ENCODE measurements at regions of chr1 and their contacts with region 1.

Region 1: DNA sequence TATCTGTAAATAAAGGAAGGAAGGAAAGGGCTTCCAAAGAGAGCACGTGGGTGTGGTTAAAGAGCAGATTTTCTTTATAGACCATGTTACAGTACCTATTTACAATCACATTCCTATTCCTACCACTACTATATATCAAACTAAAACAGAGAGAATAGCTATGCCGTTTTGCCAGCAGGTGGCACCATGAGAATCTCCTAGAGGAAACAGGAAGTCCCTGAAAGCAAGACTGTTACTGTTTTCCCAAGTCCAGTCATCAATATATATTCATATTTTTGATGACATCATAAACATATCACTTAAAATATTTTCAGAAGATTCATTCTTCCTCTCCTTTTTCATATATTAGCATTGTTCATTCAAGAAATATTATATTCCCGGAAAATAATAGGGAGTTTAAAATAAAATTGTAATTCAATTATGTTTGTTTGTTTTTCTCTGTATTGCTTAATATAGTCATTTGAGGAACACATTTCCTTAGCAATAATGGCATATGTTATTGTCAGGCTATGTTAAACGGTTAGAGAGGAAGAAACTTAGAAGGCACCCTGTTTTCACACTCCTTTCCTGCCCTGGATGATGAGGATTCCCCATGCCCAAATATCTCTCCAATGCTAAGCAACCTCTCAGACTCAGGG is 6.6 kb downstream of the CCDC190 start:
- DNase-seq: peak; percentile 55
- H3K4me3 ChIP-seq: no peak overlapping the region
- H3K27ac ChIP-seq: no peak overlapping the region
- H3K27me3 ChIP-seq: no peaks in the 10 kb centered on the region
- CTCF ChIP-seq: peak; percentile 87

Region 2: DNA sequence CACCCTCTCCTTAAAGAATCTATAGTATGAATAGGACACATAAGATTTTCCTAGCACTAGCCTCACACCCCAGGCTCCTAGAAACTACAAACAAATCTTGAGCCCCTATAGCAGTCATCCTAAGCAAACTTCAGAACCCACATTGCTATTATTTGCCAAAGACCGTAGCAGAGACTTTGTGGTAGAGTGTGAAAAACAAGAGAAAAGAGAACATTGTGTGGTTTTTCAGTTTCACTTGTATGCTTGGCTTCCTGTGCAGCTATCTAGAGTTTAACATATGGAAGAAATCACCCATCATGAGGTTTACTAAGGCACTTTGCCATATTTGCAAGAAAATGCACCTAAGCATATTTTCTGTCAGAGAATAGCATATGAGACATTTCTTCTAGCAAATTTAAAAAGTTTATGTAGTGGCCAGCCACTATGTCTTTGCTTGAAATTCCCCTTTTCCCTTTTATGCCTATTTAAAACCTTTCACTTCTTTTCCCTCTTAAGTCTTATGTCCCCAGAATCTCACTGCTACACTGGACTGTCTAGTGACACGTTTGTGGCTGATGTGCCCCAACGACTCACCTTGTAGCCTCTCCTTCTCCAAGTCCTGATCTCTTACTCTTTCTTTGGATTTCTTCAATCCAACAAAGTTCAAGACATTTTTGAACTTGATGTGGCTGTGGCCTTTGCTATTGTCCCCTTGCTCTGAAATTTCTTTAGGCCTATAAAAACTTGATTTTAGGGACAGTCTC is 19.0 kb before region 1 on chr1:
- CTCF ChIA-PET with region 1: interaction called, 16 read pairs
- POLR2A ChIA-PET with region 1: no interaction called
- DNase-seq: no peak
- H3K4me3 ChIP-seq: no peak overlapping the region
- H3K27ac ChIP-seq: no peak overlapping the region
- H3K27me3 ChIP-seq: peaks cover 7% of the 10 kb centered on the region
- CTCF ChIP-seq: no peak

Region 3: DNA sequence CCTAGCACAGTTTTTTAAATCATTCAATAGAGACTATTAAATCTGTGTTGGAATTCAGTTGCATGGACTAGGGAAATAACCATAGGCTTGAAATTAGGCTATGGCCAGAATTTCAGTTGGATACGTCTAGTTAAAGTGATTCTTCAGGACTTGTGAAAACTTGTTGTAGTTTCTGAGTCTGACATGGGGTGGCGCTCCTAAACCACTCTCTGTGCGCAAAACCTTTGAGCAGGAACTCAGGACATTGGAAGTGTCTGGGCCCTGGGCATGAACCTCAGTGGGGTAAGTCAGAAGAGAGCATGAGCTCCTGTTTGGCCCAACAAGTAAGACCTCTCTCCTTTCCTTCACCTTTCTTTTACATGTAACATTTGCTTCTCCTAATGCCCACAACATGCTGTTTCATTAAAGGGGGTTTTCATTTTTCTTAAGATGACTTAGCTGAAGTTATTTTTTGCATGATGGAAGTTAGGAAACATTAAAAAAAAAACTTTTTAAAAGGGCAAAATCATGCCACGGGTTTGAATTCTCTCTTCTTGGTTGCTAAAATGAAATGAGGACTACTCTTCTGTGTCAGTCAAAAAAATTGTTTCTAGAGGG is 23.7 kb after region 1 on chr1:
- CTCF ChIA-PET with region 1: interaction called, 28 read pairs
- POLR2A ChIA-PET with region 1: no interaction called
- DNase-seq: peak; percentile 38
- H3K4me3 ChIP-seq: no peak overlapping the region
- H3K27ac ChIP-seq: no peak overlapping the region
- H3K27me3 ChIP-seq: no peaks in the 10 kb centered on the region
- CTCF ChIP-seq: peak; percentile 84

Region 4: GRCh38 chr1:162889989-162890388 is 35.6 kb after region 1 on chr1:
- CTCF ChIA-PET with region 1: interaction called, 11 read pairs
- POLR2A ChIA-PET with region 1: no interaction called
- DNase-seq: no peak
- H3K4me3 ChIP-seq: no peak overlapping the region
- H3K27ac ChIP-seq: no peak overlapping the region
- H3K27me3 ChIP-seq: no peaks in the 10 kb centered on the region
- CTCF ChIP-seq: no peak

Region 5: DNA sequence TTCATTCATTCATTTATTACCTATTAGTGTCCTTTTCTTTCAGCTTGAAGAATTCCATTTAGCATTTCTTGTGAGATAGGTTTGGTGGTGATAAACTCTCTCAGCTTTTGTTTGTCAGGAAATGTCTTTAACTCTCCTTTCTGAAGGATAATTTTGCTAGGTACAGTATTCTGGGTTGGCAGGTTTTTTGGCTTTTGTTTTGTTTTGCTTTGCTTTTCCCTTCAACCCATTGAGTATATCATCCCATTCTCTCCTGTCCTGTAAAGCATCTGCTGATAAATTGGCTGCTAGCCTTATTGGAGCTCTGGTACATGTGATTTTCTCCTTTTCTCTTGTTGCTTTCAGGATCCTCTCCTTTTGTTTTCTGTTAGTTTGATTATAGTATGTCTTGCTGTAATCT is 167.8 kb after region 1 on chr1:
- CTCF ChIA-PET with region 1: no interaction called
- POLR2A ChIA-PET with region 1: no interaction called
- DNase-seq: no peak
- H3K4me3 ChIP-seq: no peak overlapping the region
- H3K27ac ChIP-seq: no peak overlapping the region
- H3K27me3 ChIP-seq: no peaks in the 10 kb centered on the region
- CTCF ChIP-seq: no peak

Region 6: DNA sequence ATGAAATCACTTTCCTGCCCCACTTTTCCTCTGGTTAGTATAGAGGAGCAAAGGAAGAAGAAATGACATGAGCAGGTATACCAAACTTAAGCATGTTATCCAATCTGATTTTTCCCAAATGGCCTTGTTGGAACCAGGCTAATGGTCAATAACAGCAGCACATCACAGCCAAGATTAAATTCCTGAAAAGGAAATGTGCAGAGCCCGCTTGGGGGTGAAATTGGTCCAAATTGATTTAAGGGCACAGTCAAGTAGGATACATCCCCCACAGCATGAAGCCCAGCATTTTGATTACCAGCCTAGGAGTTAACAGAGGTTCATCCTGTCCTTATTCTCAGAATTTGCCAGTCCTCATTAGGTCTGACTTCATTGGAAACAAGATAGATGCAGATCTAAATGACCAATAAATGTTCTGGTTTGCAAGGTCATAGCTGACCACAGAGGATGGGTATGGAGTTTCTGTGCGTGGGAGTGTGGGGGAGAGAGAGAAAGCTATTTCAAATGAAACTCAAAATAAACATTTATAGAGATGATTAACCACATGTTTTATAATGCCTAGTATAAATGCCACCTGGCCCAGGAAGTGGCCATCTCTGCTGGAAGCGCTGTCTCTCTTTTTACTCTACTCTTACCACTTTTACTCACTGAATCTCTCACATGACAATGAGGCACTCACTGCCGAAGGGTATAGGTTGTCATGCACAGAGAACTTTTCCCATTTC is 309.7 kb after region 1 on chr1:
- CTCF ChIA-PET with region 1: interaction called, 12 read pairs
- POLR2A ChIA-PET with region 1: no interaction called
- DNase-seq: peak; percentile 37
- H3K4me3 ChIP-seq: no peak overlapping the region
- H3K27ac ChIP-seq: peak overlapping the region; percentile 24
- H3K27me3 ChIP-seq: no peaks in the 10 kb centered on the region
- CTCF ChIP-seq: no peak

Region 7: GRCh38 chr1:163315773-163316374 is 461.5 kb after region 1 on chr1:
- CTCF ChIA-PET with region 1: interaction called, 106 read pairs
- POLR2A ChIA-PET with region 1: no interaction called
- DNase-seq: no peak
- H3K4me3 ChIP-seq: no peak overlapping the region
- H3K27ac ChIP-seq: no peak overlapping the region
- H3K27me3 ChIP-seq: no peaks in the 10 kb centered on the region
- CTCF ChIP-seq: peak; percentile 60